Heart left ventricle (tissue), 16 donors: ENCODE measurements at regions of chr3 and their contacts with region 1.

Region 1: DNA sequence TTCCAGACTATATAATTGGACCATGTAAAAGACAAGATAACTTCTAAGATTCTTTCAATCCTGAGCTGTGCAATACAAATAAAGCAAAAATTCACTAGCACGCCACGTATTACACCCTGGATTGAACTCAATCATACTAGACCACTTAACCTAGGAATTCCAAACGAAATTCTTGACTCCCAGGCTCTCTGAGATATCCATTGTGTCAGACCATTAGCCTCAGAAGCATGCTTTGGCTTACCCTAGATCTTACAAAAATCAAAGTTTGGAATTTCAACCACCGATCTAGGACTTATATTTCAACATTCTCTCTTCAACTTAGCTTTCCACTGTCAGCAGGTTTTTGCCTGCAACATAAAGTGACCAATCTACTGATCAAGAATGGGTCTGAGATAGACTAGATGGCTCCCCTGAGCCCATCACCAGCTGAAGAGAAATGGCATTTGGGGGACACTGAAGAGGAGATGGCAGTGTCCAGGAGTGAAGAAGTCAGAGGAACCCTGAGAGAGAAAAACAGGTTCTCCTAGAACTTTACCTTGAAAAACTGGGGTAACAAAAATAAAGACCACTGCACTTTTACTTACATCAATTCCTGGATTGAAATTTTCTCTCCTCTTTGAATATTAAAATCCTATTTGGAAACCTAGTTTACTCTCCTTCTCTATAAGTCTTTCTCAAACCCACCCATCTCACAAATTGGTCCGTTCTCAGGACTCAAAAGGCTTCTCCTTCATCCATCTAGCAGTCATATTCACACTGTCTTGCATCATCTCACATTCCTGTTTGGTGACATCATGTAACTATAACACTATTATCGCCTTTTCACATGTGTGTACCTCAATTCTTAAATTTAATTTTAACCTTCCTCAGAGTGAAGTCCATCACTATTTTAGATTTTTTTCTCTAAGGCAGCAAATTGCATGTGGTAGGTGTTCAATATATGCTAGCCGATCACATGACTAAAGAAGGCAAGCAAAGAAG is 18.5 kb downstream of the CPNE4 start:
- DNase-seq: no peak
- ATAC-seq: no peak
- H3K4me3 ChIP-seq: no peak overlapping the region
- H3K27ac ChIP-seq: no peak overlapping the region
- H3K4me1 ChIP-seq: no peaks in the 10 kb centered on the region
- H3K27me3 ChIP-seq: peaks cover 0 to 30% (median 0%) of the 10 kb centered on the region in 9 donors
- CTCF ChIP-seq: no peak
- POLR2A ChIP-seq: no peak

Region 2: DNA sequence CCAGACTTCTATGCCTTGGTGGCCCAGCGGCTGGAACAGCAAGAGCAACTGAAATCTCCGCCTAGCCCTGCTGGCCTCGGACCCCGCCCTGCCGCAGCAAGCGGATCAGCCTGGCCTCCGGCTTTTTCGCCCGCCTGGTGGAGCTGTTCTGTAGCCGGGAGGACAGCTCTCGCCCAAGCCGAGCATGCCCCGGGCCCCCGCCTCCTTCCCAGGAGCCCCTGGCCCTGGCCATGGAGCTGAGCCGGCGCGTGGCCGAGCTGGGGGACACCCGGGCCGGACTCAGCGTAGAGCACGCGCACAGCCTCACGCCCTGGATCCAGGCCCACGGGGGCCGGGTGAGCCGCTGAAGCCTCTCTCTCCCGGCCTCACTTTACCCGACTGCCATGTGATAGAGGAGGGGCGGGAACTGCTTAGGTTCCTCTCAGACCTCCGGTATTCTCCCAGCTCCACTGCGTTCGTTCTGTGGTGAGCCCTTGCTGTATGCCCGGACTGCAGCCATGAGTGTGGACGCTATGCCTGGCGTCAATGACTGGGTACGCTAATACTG is 489.5 kb before region 1 on chr3:
- intact Hi-C with region 1: loop called in 1 of 10 experiments (anchors 10 kb)
- DNase-seq: peak; percentile 14 to 77 (median 45)
- ATAC-seq: peak; percentile 84 to 98 (median 87)
- H3K4me3 ChIP-seq: peak overlapping the region in 11 of 12 donors; percentile 10 to 51 (median 40)
- H3K27ac ChIP-seq: no peak overlapping the region
- H3K4me1 ChIP-seq: peaks cover 0 to 7% (median 0%) of the 10 kb centered on the region in 12 donors
- H3K27me3 ChIP-seq: peaks cover 0 to 33% (median 0%) of the 10 kb centered on the region in 9 donors
- CTCF ChIP-seq: peak in 10 of 12 donors; percentile 13 to 56 (median 33)
- POLR2A ChIP-seq: no peak

Region 3: DNA sequence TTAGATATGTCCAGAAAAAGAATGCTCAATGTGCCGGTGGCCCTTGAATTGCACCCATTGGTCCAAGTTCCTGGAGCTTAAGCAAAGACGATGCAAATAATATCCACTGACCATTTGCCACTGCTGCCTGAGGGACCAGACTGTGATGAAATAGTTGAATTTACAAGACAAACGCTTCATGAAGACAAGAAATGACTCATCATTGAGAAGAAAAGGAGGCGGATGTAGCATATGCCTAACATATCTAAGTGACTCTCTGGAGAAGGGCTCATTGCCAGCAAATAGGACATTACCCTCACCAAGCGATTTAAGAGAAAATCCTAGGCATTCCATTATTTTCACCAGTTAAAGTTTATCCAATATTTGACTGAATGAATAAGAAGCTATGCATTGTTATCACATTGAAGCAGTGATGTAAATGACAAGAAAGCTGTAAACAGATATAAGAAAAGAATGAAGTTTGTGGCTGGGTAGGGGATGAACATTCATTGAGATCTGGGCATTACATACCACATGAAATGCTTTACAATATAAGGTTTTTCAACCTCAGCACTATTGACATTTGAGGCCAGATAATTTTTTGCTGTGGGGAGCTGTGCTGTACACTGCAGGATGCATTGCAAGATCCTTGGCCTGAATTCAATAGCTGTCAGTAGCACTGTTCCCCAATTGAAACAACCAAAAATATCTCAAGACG is 67.4 kb after region 1 on chr3:
- intact Hi-C with region 1: no loop called
- DNase-seq: no peak
- ATAC-seq: no peak
- H3K4me3 ChIP-seq: no peak overlapping the region
- H3K27ac ChIP-seq: no peak overlapping the region
- H3K4me1 ChIP-seq: peaks cover 0 to 1% (median 0%) of the 10 kb centered on the region in 12 donors
- H3K27me3 ChIP-seq: no peaks in the 10 kb centered on the region
- CTCF ChIP-seq: no peak
- POLR2A ChIP-seq: no peak

Region 4: GRCh38 chr3:132293251-132293650 is 276.9 kb after region 1 on chr3:
- intact Hi-C with region 1: no loop called
- DNase-seq: no peak
- ATAC-seq: no peak
- H3K4me3 ChIP-seq: no peak overlapping the region
- H3K27ac ChIP-seq: no peak overlapping the region
- H3K4me1 ChIP-seq: peaks cover 0 to 22% (median 0%) of the 10 kb centered on the region in 12 donors
- H3K27me3 ChIP-seq: no peaks in the 10 kb centered on the region
- CTCF ChIP-seq: no peak
- POLR2A ChIP-seq: no peak

Region 5: GRCh38 chr3:132432639-132433038 is 416.3 kb after region 1 on chr3:
- intact Hi-C with region 1: no loop called
- DNase-seq: no peak
- ATAC-seq: no peak
- H3K4me3 ChIP-seq: no peak overlapping the region
- H3K27ac ChIP-seq: peak overlapping the region in 1 of 12 donors; percentile 17
- H3K4me1 ChIP-seq: peaks cover 0 to 41% (median 2%) of the 10 kb centered on the region in 12 donors
- H3K27me3 ChIP-seq: no peaks in the 10 kb centered on the region
- CTCF ChIP-seq: no peak
- POLR2A ChIP-seq: no peak